Activated CD8-positive, alpha-beta memory T cell treated with anti-CD3 and anti-CD28 coated beads, Interleukin-2, amount 10 ng/mL, durations not matched to agents 7 days and 5 days (primary cell): ENCODE measurements at regions of chrX and their contacts with region 1.

Region 1: GRCh38 chrX:107776649-107777535 is 641 bp upstream of the NCBP2L start:
- DNase-seq: peak; percentile 81
- ATAC-seq: peak; percentile 82
- H3K4me3 Mint-ChIP-seq: peak overlapping the region; percentile 78
- H3K27ac Mint-ChIP-seq: peak overlapping the region; percentile 52
- H3K4me1 Mint-ChIP-seq: peaks cover 7% of the 10 kb centered on the region
- H3K27me3 Mint-ChIP-seq: peaks cover 3% of the 10 kb centered on the region

Region 2: DNA sequence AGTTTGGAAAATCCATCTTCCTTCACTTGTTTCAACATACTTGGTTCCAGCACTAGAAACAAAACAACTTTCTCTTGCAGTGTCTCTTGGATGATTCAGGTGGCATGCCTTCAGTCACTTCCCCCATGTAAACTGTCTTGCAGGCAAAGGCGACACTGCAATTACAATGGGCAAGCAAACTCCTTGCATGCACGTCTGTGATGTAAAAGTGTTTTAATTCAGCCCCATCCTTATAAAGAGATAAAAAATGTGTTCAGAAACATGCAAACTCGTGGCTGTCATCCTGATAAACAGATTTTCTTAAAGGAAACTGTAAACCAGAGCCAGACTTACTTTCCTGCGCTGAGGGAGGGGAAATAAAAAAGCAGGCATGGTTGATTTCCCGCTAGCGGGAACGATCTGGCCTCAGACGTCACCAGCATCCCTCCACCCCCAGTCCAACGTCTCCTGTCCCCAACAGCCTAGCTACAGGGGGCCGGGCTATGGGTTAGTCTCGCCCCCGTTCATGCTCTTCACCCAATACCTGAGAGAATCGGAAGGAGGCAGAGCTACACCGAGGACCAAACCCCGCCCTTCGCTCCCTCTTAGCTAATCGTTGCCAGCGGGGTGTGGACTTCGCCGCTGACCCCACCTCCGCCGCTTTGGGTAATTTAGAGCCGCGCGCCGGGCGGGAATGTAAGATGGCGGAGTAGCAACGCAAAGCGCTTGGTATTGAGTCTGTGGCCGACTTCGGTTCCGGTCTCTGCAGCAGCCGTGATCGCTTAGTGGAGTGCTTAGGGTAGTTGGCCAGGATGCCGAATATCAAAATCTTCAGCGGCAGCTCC is 148.8 kb before region 1 on chrX and contains the start of gene PRPS1:
- CTCF ChIA-PET with region 1: interaction called, 11 read pairs
- DNase-seq: peak; percentile 95
- ATAC-seq: peak; percentile 99
- H3K4me3 Mint-ChIP-seq: peak within 1 kb of the TSS; percentile 80
- H3K27ac Mint-ChIP-seq: peak within 1 kb of the TSS; percentile 93
- H3K4me1 Mint-ChIP-seq: peaks cover 27% of the 10 kb centered on the region
- H3K27me3 Mint-ChIP-seq: no peaks in the 10 kb centered on the region
- total RNA-seq, gene PRPS1: 68.3 to 75.7 TPM

Region 3: DNA sequence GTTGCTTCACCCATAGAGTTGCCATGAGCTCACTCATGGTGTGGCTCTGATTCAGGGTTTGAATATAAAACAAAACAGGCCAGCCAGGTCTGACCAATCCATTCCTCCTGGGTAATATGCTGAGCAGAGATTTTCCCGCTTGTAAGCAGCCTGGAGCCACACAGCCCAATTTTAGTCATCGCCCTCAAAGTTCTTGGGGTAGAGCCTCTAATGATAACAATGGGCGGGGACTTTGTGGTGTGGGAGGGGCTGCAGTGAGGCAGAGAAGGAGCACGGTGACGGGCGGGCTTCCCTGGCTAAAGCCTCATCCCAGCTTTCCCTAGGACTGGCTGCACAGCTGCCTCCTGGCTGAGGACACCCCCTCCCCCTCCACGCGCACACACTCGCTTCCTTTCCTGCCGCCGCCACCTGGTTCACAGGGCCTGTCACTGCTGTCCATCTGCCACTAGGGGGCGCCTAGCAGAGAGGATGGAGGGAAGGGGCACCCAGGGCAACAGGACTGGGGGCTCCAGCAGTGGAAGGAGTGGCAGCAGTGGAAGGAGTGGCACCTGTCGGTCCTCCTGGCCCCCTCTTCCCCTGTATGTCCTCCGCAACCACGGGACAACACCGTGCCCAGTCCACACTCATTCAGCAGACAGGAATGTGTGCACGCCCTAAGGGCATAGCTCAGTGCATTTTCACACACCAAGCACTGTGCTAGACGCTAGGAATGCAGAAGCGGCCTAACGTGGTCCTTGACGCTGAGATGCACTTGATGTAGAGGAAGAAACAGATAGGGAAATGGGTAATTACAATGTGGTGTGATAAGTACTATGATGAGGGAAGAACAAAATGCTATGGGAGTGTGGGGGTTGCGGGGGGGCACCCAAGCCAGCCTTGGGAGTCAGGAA is 121.8 kb before region 1 on chrX:
- CTCF ChIA-PET with region 1: interaction called, 148 read pairs
- DNase-seq: peak; percentile 70
- ATAC-seq: peak; percentile 90
- H3K4me3 Mint-ChIP-seq: no peak overlapping the region
- H3K27ac Mint-ChIP-seq: no peak overlapping the region
- H3K4me1 Mint-ChIP-seq: peaks cover 12% of the 10 kb centered on the region
- H3K27me3 Mint-ChIP-seq: no peaks in the 10 kb centered on the region

Region 4: GRCh38 chrX:107662824-107663223 is 114.1 kb before region 1 on chrX:
- CTCF ChIA-PET with region 1: interaction called, 148 read pairs
- DNase-seq: no peak
- ATAC-seq: no peak
- H3K4me3 Mint-ChIP-seq: no peak overlapping the region
- H3K27ac Mint-ChIP-seq: no peak overlapping the region
- H3K4me1 Mint-ChIP-seq: no peaks in the 10 kb centered on the region
- H3K27me3 Mint-ChIP-seq: no peaks in the 10 kb centered on the region

Region 5: GRCh38 chrX:107672955-107673378 is 103.9 kb before region 1 on chrX:
- CTCF ChIA-PET with region 1: interaction called, 69 read pairs
- DNase-seq: peak; percentile 84
- ATAC-seq: peak; percentile 41
- H3K4me3 Mint-ChIP-seq: peak overlapping the region; percentile 48
- H3K27ac Mint-ChIP-seq: peak overlapping the region; percentile 92
- H3K4me1 Mint-ChIP-seq: peaks cover 45% of the 10 kb centered on the region
- H3K27me3 Mint-ChIP-seq: no peaks in the 10 kb centered on the region

Region 6: GRCh38 chrX:107716816-107717700 is 59.8 kb before region 1 on chrX:
- CTCF ChIA-PET with region 1: interaction called, 34 read pairs
- DNase-seq: peak; percentile 93
- ATAC-seq: peak; percentile 72
- H3K4me3 Mint-ChIP-seq: peak overlapping the region; percentile 96
- H3K27ac Mint-ChIP-seq: peak overlapping the region; percentile 94
- H3K4me1 Mint-ChIP-seq: peaks cover 46% of the 10 kb centered on the region
- H3K27me3 Mint-ChIP-seq: no peaks in the 10 kb centered on the region

Region 7: GRCh38 chrX:107741404-107741790 is 35.5 kb before region 1 on chrX:
- CTCF ChIA-PET with region 1: interaction called, 14 read pairs
- DNase-seq: no peak
- ATAC-seq: peak; percentile 5
- H3K4me3 Mint-ChIP-seq: peak overlapping the region; percentile 68
- H3K27ac Mint-ChIP-seq: peak overlapping the region; percentile 98
- H3K4me1 Mint-ChIP-seq: peaks cover 14% of the 10 kb centered on the region
- H3K27me3 Mint-ChIP-seq: no peaks in the 10 kb centered on the region